ENCODE measurements at regions of chr2 and their contacts with region 1.

Region 1: DNA sequence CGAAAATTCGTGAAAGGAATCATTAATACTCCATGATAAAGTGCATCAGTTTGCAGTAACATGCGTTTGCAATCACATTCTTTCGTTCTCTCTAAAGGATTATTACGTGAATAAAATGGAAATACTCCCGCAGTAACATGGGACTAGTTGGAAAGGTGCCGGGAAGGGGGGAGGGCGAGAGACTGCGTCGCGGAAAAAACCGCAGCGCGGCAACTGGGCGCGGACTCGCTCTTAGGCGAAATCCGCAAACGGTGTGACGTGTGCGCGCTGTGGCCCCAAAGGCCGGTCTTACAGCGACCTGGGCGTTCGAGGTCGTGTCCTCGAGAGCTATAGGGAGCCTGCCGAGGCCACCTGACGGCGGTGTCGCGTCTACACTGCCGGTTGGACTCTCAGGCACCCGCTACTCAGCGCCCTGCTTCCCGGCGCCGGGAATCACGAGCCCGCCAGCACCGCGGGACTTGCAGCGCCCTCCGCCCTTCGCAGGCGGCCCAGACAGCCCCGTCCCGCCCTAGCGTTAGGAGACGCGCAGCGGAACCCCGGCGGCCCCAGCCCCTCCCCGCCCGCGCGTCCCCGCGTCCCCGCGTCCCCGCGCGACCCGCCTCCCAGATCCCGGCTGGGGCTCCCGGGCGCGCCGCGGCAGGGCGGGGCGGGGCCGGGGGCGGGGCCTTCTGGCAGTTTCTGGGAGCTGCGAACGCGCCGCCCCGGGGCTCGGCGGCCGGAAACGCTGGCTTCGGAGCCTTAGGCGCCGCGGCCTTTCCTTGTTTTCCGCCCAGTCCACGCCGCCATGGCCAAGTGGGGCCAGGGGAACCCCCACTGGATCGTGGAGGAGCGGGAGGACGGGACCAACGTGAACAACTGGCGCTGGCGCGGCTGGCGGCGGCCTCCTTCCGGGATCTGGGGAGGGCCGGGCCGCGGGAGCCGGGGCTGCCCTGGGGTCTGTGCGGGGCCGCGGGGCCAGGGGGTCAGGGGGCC is 15.1 kb downstream of the C2orf74 start:
- DNase-seq: peak; percentile 95 to 98 (median 96)
- ATAC-seq: peak; percentile 78 to 93 (median 90)
- H3K4me3 ChIP-seq: peak overlapping the region; percentile 64 to 93 (median 80)
- H3K27ac ChIP-seq: peak overlapping the region; percentile 88 to 100 (median 99)
- H3K4me1 ChIP-seq: peaks cover 0 to 59% (median 47%) of the 10 kb centered on the region in 12 donors
- H3K27me3 ChIP-seq: no peaks in the 10 kb centered on the region
- CTCF ChIP-seq: peak in 5 of 12 donors; percentile 16 to 36 (median 27)
- POLR2A ChIP-seq: peak; percentile 20 to 91

Region 2: DNA sequence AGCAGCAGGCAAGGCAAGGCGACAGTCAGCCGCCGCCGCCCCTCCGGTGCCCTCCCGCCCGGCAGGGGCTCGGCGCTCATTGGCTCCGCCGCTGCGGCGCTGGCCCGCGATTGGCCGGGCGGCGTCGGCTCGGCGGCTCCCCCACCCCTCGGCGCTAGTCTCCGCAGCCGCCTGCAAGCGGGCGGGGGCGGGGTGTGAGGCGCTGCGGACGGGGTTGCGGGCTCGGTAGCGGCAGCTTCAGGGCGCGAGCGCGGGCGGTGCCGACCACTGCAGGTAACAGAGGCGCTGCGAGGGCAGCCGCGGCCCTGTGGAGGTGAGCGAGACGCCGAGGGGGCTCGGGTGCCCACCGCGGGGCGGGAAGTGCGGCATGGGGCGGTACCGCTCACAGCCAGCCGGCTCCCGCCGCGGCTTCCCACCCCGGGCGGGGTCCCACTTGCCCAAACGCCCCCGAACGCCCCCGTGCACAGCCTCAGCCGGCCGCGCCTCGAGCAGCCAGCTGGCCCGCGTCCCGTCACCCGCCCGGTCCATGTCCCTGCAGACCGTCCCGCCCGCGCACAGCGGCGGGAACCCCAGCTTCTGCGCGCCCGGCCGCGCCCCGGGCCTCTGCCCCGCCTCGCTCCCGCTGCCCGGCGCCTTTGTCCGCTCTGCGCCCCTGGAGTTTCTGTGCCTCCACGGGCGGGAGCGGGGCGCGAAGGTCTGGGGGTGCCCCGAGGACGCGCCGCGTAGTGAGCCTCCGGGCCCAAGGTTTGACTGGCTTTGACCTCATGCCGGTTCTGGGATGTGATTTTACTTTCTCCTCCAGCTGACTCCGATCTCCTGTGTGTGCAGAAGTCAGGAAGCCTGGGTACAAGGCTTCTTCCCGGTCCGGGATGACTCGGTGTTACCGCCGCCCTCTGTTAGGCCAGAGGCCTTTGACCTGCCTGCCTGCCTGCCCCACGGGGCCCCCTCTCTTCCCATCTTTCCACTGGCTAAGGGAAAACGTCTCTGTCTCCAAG is 111.0 kb before region 1 on chr2 and contains the start of gene SANBR:
- intact Hi-C with region 1: loop called in 1 of 10 experiments (anchors 5 kb)
- DNase-seq: peak; percentile 88 to 93 (median 91)
- ATAC-seq: peak; percentile 89 to 99 (median 98)
- H3K4me3 ChIP-seq: peak within 1 kb of the TSS; percentile 78 to 97 (median 92)
- H3K27ac ChIP-seq: peak within 1 kb of the TSS; percentile 57 to 94 (median 86)
- H3K4me1 ChIP-seq: peaks cover 0 to 15% (median 7%) of the 10 kb centered on the region in 12 donors
- H3K27me3 ChIP-seq: no peaks in the 10 kb centered on the region
- CTCF ChIP-seq: peak in 3 of 12 donors; percentile 14 to 30 (median 24)
- POLR2A ChIP-seq: peak in 1 of 2 donors; percentile 77
- total RNA-seq, gene SANBR: 3.6 to 10.7 (median 6.6) TPM

Region 3: GRCh38 chr2:61144697-61145268 is 32.3 kb before region 1 on chr2:
- intact Hi-C with region 1: loop called in 3 of 10 experiments (anchors 2 kb)
- DNase-seq: peak; percentile 96 to 98 (median 96)
- ATAC-seq: peak; percentile 98 to 99 (median 99)
- H3K4me3 ChIP-seq: peak overlapping the region; percentile 41 to 79 (median 65)
- H3K27ac ChIP-seq: peak overlapping the region; percentile 14 to 93 (median 83)
- H3K4me1 ChIP-seq: peaks cover 0 to 16% (median 5%) of the 10 kb centered on the region in 12 donors
- H3K27me3 ChIP-seq: no peaks in the 10 kb centered on the region
- CTCF ChIP-seq: peak in 1 of 12 donors; percentile 15
- POLR2A ChIP-seq: peak in 1 of 2 donors; percentile 74

Region 4: DNA sequence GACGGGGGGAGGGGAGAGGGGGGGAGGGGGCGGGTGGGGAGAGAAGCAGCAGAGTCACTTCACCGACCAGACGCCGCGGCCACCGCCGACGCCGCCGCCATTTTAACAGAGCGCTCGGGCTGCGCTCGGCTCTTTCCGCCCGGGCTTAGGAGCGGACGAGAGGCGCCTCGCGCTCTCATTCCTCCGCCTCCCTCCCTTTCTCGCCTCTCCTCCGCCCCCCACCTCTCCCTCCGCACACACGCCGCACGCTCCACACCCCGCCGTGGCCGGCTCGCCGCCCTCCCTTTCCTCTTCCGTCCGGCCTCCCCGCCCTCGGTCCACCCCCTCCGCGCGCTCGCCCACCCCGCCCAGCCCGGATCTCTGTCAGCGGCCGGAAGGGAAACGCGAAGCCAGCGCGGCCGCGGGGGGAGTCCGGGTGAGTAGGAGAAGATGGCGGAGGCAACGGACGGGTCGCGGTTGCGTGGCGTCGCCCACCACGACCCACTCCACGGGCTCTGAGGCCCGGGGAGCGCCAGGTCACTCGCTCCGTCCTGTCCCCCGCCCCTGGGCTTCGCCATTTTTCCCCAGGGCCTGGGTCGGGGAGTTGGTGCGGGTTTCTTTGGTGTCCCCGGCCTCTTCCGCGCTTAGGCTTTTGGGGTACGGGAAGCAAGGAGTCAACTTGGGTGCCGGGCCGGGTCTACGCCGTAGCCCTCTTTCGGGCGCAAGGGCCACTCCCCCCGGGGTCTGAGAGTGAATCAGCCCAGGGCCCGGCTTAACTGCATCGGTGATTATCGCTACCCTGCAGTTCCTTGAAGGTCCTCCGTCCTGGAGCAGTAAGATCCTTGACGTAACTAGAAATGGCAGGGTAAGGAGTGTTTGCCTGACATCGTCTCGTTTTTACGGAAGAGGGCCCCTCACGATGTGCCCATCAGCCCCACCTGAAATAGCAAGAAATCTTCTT is 294.2 kb after region 1 on chr2 and contains the start of gene USP34:
- intact Hi-C with region 1: loop called in 2 of 10 experiments (anchors 2 to 5 kb)
- DNase-seq: peak; percentile 96 to 97 (median 97)
- ATAC-seq: peak; percentile 96 to 98 (median 97)
- H3K4me3 ChIP-seq: peak within 1 kb of the TSS; percentile 68 to 99 (median 90)
- H3K27ac ChIP-seq: peak within 1 kb of the TSS; percentile 95 to 100 (median 98)
- H3K4me1 ChIP-seq: peaks cover 2 to 41% (median 26%) of the 10 kb centered on the region in 12 donors
- H3K27me3 ChIP-seq: no peaks in the 10 kb centered on the region
- CTCF ChIP-seq: no peak
- POLR2A ChIP-seq: peak in 1 of 2 donors; percentile 85
- total RNA-seq, gene USP34: 48.5 to 82.8 (median 61.9) TPM

Region 5: GRCh38 chr2:61520261-61520660 is 343.2 kb after region 1 on chr2:
- intact Hi-C with region 1: no loop called
- DNase-seq: no peak
- ATAC-seq: no peak
- H3K4me3 ChIP-seq: no peak overlapping the region
- H3K27ac ChIP-seq: no peak overlapping the region
- H3K4me1 ChIP-seq: peaks cover 0 to 16% (median 4%) of the 10 kb centered on the region in 12 donors
- H3K27me3 ChIP-seq: no peaks in the 10 kb centered on the region
- CTCF ChIP-seq: no peak
- POLR2A ChIP-seq: no peak

Measured in heart left ventricle (tissue), 16 donors.